Lower leg skin (tissue), 4 donors: ENCODE measurements at regions of chr18 and their contacts with region 1.

Region 1: DNA sequence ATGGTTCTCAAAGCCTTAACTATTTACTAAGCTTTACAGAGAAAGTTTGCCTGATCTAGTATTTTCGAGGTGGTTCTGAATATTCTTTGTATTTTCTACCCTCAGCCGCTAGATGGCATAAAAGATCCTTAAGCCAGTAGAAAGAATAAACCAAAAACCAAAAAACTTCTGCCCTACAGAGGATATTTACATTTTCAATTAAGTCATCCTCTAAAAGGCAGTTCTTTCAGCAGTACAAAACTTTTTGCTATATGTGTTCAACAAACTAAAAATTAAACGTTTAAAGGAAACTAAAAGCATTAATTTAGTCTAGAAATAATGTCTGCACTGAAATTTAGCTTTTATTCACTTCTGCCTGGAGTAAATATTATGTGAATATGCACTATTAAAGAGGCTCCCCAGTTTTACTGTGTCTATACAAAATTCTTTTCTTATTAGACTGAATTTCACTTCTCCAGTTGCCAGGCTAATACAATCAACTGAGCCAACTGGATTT is 297.5 kb downstream of the PIEZO2 start:
- DNase-seq: no peak
- H3K4me3 ChIP-seq: no peak overlapping the region
- CTCF ChIP-seq: no peak
- POLR2A ChIP-seq: no peak

Region 2: GRCh38 chr18:11040823-11041656 is 189.2 kb after region 1 on chr18:
- intact Hi-C with region 1: loop called (anchors 10 kb)
- DNase-seq: peak in 1 of 2 donors; percentile 43
- H3K4me3 ChIP-seq: no peak overlapping the region
- CTCF ChIP-seq: peak in 1 of 3 donors; percentile 32
- POLR2A ChIP-seq: no peak

Region 3: DNA sequence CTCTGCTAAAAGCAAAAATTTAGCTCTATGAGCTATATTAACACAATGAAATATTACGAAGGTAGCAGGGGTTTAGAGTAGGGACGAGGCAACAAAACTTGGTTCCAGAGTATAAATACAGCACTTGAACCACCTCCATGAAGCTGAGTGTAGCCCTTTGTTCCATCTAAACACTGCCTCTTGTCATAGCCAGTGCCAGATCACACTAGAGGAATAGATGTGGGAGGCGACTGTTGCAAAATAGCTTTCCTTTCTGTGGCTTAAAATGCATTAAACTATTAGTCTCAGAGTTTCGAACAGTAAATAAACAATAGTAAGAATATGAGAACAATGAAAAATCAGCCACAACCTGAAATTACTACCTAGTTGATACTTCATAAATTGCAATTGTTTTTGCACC is 267.7 kb after region 1 on chr18:
- intact Hi-C with region 1: no loop called
- DNase-seq: no peak
- H3K4me3 ChIP-seq: no peak overlapping the region
- CTCF ChIP-seq: no peak
- POLR2A ChIP-seq: no peak

Region 4: DNA sequence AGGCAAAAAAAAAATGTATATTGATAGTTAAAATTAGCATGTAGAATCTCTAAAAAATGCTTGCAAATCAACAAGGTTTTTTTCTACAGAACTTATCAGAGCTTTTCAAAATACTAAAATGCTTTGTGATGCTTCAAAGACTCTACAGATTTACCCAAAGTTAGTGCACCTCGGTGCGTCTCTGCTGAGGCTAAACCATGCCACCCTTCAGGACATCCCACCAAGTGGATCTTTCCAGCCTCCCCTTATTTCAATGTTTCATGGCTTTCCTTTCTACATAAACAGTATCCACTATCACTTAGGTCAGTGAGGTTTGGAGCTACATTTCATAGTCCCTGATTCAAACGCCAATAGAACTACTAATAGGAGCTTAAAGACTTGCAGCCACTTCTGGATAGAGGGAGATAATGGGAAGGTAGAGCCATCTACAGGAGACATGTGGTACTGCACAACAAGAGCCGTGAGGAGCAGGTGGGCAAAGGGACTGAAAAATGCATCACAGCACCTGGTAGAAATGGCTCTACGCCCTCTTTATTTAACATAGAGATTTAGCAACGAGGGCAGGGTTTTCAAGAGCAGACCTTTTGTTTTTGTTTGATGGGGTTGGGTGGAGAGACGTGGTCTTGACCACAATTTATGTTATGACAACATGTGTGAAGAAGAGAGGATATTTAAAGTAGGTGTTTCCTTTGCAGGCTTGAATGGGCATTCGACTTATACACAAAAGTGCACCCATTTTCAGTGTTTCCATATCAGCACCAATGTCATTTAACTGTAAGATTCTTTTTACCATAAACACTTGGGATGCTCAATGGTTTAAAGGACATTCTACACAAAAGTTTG is 701.4 kb after region 1 on chr18:
- intact Hi-C with region 1: loop called (anchors 10 kb)
- DNase-seq: peak in 1 of 2 donors; percentile 26
- H3K4me3 ChIP-seq: no peak overlapping the region
- CTCF ChIP-seq: peak in 1 of 3 donors; percentile 52
- POLR2A ChIP-seq: no peak